Sciatic nerve (tissue), 2 donors: ENCODE measurements at regions of chr6 and their contacts with region 1.

Region 1: DNA sequence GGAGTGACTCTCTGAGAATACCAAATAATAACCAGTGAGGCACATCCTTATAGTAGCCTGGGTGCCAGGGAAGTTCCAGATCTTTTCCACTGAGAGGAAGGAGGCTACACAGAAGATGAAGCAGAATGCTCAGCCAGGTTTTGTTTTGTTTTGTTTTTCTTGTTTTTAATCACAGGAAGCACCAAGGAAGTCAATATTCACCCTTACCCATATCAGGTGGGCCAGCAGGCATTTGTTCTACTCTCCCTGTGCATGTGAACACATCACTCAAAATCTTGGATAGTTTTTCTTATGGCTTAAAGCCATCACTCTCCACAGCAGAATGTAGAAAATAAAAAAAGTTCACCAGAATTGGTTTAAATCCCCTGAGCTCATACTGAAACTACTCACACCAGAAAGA is 10.5 kb downstream of the SLC17A1 start:
- DNase-seq: no peak
- ATAC-seq: no peak

Region 2: GRCh38 chr6:24643925-24644324 is 1177.4 kb before region 1 on chr6:
- intact Hi-C with region 1: loop called (anchors 5 kb)
- DNase-seq: no peak
- ATAC-seq: no peak